CD4-positive, alpha-beta memory T cell (primary cell): ENCODE measurements at regions of chr19 and their contacts with region 1.

Region 1: GRCh38 chr19:40777937-40778705 is at the start of gene RAB4B:
- DNase-seq: peak; percentile 100
- H3K4me3 ChIP-seq: peak within 1 kb of the TSS; percentile 67 to 98
- H3K4me3 Mint-ChIP-seq: peak within 1 kb of the TSS; percentile 92 to 98 (median 95)
- H3K27ac ChIP-seq: peak within 1 kb of the TSS; percentile 89
- H3K27ac Mint-ChIP-seq: peak within 1 kb of the TSS; percentile 95 to 99 (median 99)
- H3K4me1 ChIP-seq: peaks cover 29% of the 10 kb centered on the region
- H3K4me1 Mint-ChIP-seq: peaks cover 24 to 45% (median 31%) of the 10 kb centered on the region in 4 donors
- H3K27me3 ChIP-seq: no peaks in the 10 kb centered on the region
- H3K27me3 Mint-ChIP-seq: no peaks in the 10 kb centered on the region
- total RNA-seq, gene RAB4B: 53.5 to 55.0 TPM

Region 2: GRCh38 chr19:40690693-40691420 is 87.3 kb before region 1 on chr19:
- CTCF ChIA-PET with region 1: no interaction called
- POLR2A ChIA-PET with region 1: interaction called, 16 read pairs
- intact Hi-C with region 1: no loop called
- DNase-seq: peak; percentile 78 to 85 (median 80)
- H3K4me3 ChIP-seq: peak overlapping the region; percentile 66 to 73
- H3K4me3 Mint-ChIP-seq: peak overlapping the region; percentile 85 to 94 (median 90)
- H3K27ac ChIP-seq: peak overlapping the region; percentile 60
- H3K27ac Mint-ChIP-seq: peak overlapping the region; percentile 61 to 97 (median 92)
- H3K4me1 ChIP-seq: peaks cover 8% of the 10 kb centered on the region
- H3K4me1 Mint-ChIP-seq: peaks cover 2 to 6% (median 4%) of the 10 kb centered on the region in 4 donors
- H3K27me3 ChIP-seq: no peaks in the 10 kb centered on the region
- H3K27me3 Mint-ChIP-seq: no peaks in the 10 kb centered on the region

Region 3: DNA sequence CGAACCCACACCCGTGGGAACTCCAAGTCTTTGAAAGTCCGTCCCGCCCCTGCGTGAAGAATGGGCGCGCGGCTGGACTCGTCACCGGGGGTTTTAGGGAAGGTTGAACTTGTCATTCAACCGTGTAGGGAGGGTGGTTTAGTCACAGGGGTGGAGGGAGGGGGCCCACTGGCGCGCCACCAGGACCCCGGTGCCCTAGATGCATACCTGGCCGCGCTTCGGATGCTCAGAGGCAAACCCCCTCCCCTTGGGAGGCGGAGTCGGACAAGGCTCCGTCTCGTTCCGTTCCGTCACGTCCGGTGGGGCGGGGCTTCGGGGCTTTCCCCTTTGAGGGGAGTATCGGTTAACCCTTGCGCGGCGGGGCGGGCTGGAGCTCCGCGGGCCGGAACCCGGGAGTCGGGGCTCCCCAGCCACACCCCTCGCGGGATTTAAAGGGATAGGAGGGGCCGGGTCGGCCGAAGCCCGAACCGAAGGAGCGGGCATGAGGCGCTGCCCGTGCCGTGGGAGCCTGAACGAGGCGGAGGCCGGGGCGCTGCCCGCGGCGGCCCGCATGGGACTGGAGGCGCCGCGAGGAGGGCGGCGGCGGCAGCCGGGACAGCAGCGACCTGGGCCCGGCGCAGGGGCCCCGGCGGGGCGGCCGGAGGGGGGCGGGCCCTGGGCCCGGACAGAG is 61.3 kb before region 1 on chr19 and contains the starts of genes COQ8B and ITPKC:
- CTCF ChIA-PET with region 1: interaction called, 7 read pairs
- POLR2A ChIA-PET with region 1: interaction called, 35 read pairs
- intact Hi-C with region 1: loop called (anchors 1 kb)
- DNase-seq: peak; percentile 98 to 100 (median 99)
- H3K4me3 ChIP-seq: peak within 1 kb of the TSS; percentile 78 to 83
- H3K4me3 Mint-ChIP-seq: peak within 1 kb of the TSS; percentile 87 to 97 (median 92)
- H3K27ac ChIP-seq: peak within 1 kb of the TSS; percentile 98
- H3K27ac Mint-ChIP-seq: peak within 1 kb of the TSS; percentile 96 to 99 (median 98)
- H3K4me1 ChIP-seq: peaks cover 70% of the 10 kb centered on the region
- H3K4me1 Mint-ChIP-seq: peaks cover 40 to 83% (median 58%) of the 10 kb centered on the region in 4 donors
- H3K27me3 ChIP-seq: no peaks in the 10 kb centered on the region
- H3K27me3 Mint-ChIP-seq: no peaks in the 10 kb centered on the region
- total RNA-seq, gene COQ8B: 48.0 to 54.7 TPM
- total RNA-seq, gene ITPKC: 8.1 to 10.2 TPM

Region 4: DNA sequence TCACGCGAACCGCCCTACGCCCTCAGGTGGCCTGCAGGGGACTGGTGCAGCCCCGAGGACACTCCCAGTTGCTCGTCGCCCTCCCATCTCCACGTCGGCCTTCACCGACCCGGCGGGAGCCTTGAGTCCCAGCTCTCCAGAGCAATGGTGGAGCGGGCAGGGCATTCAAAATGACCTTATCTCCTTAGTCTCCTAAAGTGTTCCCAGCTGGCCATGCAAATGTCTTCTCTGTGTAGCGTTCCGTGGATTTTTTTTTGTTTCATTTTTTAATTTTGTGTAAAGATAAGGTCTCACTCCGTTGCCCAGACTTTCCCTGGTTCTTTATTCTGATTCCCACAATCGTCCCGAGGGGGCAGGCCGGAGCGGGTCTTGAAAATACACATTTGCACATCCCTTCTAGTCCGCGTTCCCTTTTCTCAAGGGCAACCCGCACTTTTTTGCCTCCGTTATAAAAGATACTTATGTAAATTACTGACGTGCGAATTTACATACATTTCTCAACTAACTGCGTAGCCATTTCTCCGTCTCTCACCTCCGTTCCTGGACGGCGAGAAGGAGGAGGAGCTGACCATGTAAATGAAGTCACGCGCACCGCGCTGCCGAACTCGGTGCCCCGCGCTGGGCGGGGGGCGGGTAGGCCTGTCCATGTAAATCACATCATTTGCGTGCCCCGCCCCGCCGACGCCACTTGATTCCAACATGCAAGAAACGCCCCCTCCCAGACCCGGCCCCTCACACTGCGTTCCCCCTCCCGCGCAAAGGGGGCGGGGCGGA is 20.3 kb after region 1 on chr19:
- CTCF ChIA-PET with region 1: interaction called, 40 read pairs
- POLR2A ChIA-PET with region 1: interaction called, 369 read pairs
- intact Hi-C with region 1: loop called (anchors 1 kb)
- DNase-seq: peak; percentile 100
- H3K4me3 ChIP-seq: peak overlapping the region; percentile 55 to 86
- H3K4me3 Mint-ChIP-seq: peak overlapping the region; percentile 92 to 99 (median 96)
- H3K27ac ChIP-seq: peak overlapping the region; percentile 82
- H3K27ac Mint-ChIP-seq: peak overlapping the region; percentile 98 to 100 (median 99)
- H3K4me1 ChIP-seq: peaks cover 47% of the 10 kb centered on the region
- H3K4me1 Mint-ChIP-seq: peaks cover 30 to 55% (median 41%) of the 10 kb centered on the region in 4 donors
- H3K27me3 ChIP-seq: no peaks in the 10 kb centered on the region
- H3K27me3 Mint-ChIP-seq: no peaks in the 10 kb centered on the region

Region 5: GRCh38 chr19:40806488-40807468 is 28.7 kb after region 1 on chr19:
- CTCF ChIA-PET with region 1: interaction called, 46 read pairs
- POLR2A ChIA-PET with region 1: interaction called, 369 read pairs
- intact Hi-C with region 1: loop called (anchors 1 kb)
- DNase-seq: peak; percentile 82 to 92 (median 83)
- H3K4me3 ChIP-seq: peak overlapping the region in 1 of 2 donors; percentile 23
- H3K4me3 Mint-ChIP-seq: peak overlapping the region; percentile 80 to 90 (median 88)
- H3K27ac ChIP-seq: peak overlapping the region; percentile 84
- H3K27ac Mint-ChIP-seq: peak overlapping the region; percentile 91 to 100 (median 99)
- H3K4me1 ChIP-seq: peaks cover 97% of the 10 kb centered on the region
- H3K4me1 Mint-ChIP-seq: peaks cover 63 to 96% (median 78%) of the 10 kb centered on the region in 4 donors
- H3K27me3 ChIP-seq: no peaks in the 10 kb centered on the region
- H3K27me3 Mint-ChIP-seq: no peaks in the 10 kb centered on the region

Region 6: DNA sequence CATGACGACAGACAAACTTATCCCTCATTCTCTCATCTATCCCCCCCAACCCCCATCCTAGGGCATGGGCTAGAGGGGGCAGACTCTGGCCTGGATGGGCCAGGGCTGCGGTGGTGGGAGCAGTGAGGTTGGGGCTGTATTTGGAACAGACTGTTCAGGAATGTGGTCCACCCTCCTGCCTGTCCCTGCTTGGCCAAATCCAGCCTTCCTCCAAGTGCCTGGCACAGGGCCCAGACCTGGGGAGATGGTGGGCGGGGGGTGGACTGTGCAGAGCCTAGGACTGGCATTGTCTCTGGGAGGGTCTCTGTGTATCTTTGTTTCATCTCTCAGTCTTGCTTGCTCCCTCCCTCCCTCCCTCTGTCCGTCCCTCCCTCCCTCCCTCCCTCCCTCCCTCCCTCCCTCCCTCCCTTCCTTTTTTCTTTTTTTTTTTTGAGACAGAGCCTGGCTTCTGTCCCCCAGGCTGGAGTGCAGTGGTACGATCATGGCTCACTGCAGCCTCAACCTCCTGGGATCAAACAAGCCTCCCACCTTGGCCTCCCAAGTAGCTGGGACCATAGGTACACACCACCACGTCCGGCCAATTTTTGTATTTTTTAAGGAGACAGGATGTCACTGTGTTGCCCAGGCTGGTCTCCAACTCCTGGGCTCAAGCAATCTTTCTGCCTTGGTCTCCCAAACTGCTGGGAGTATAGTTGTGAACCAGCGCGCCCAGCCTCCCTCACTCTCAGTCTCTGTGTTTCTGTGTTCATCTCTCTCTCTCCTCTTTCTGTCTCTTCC is 35.2 kb after region 1 on chr19:
- CTCF ChIA-PET with region 1: interaction called, 46 read pairs
- POLR2A ChIA-PET with region 1: interaction called, 369 read pairs
- intact Hi-C with region 1: loop called (anchors 2 kb)
- DNase-seq: no peak
- H3K4me3 ChIP-seq: no peak overlapping the region
- H3K4me3 Mint-ChIP-seq: peak overlapping the region in 4 of 8 donors; percentile 41 to 97 (median 78)
- H3K27ac ChIP-seq: no peak overlapping the region
- H3K27ac Mint-ChIP-seq: peak overlapping the region; percentile 8 to 86 (median 49)
- H3K4me1 ChIP-seq: peaks cover 49% of the 10 kb centered on the region
- H3K4me1 Mint-ChIP-seq: peaks cover 18 to 58% (median 33%) of the 10 kb centered on the region in 4 donors
- H3K27me3 ChIP-seq: no peaks in the 10 kb centered on the region
- H3K27me3 Mint-ChIP-seq: no peaks in the 10 kb centered on the region

Region 7: DNA sequence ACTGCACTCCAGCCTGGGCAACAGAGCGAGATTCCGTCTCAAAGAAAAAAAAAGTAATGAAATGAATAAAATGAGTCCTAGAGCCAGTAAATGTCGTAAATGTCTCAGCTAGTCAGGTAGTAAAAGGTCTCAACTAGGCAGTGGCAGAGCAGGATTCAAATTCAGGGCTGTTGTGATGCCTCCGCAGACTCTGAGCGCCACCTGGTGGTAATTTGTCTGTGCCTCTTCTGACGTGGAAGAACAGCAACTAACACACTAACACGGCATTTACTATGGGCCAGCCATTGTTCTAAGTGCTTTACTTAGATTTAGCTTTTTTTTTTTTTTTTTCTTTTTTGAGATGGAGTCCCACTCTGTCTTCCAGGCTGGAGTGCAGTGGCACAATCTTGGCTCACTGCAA is 366.3 kb after region 1 on chr19:
- CTCF ChIA-PET with region 1: no interaction called
- POLR2A ChIA-PET with region 1: interaction called, 3 read pairs
- intact Hi-C with region 1: loop called (anchors 1 kb)
- DNase-seq: peak; percentile 85 to 88 (median 86)
- H3K4me3 ChIP-seq: no peak overlapping the region
- H3K4me3 Mint-ChIP-seq: no peak overlapping the region
- H3K27ac ChIP-seq: no peak overlapping the region
- H3K27ac Mint-ChIP-seq: peak overlapping the region in 5 of 7 donors; percentile 39 to 84 (median 81)
- H3K4me1 ChIP-seq: no peaks in the 10 kb centered on the region
- H3K4me1 Mint-ChIP-seq: peaks cover 0 to 2% (median under 1%) of the 10 kb centered on the region in 4 donors
- H3K27me3 ChIP-seq: no peaks in the 10 kb centered on the region
- H3K27me3 Mint-ChIP-seq: peaks cover 6 to 11% of the 10 kb centered on the region in 2 donors